CD8-positive, alpha-beta T cell (primary cell): ENCODE measurements at regions of chr14 and their contacts with region 1.

Region 1: GRCh38 chr14:106511006-106511799 is 984.8 kb downstream of the TMEM121 start:
- DNase-seq: peak; percentile 35 to 86 (median 65)
- ATAC-seq: peak; percentile 55
- H3K4me3 ChIP-seq: peak overlapping the region in 1 of 2 experiments; percentile 12
- H3K4me3 Mint-ChIP-seq: peak overlapping the region; percentile 63
- H3K27ac ChIP-seq: peak overlapping the region; percentile 66 to 68
- H3K27ac Mint-ChIP-seq: peak overlapping the region; percentile 98
- H3K4me1 ChIP-seq: peaks cover 68% of the 10 kb centered on the region
- H3K4me1 Mint-ChIP-seq: peaks cover 76% of the 10 kb centered on the region
- H3K27me3 ChIP-seq: no peaks in the 10 kb centered on the region
- H3K27me3 Mint-ChIP-seq: no peaks in the 10 kb centered on the region
- CTCF ChIP-seq: no peak

Region 2: GRCh38 chr14:106228541-106229158 is 282.6 kb before region 1 on chr14:
- CTCF ChIA-PET with region 1: no interaction called
- POLR2A ChIA-PET with region 1: no interaction called
- intact Hi-C with region 1: no loop called
- DNase-seq: peak in 8 of 9 experiments; percentile 21 to 74 (median 42)
- ATAC-seq: peak; percentile 95
- H3K4me3 ChIP-seq: peak overlapping the region; percentile 16 to 36
- H3K4me3 Mint-ChIP-seq: peak overlapping the region; percentile 87
- H3K27ac ChIP-seq: peak overlapping the region; percentile 45 to 64
- H3K27ac Mint-ChIP-seq: peak overlapping the region; percentile 97
- H3K4me1 ChIP-seq: peaks cover 54% of the 10 kb centered on the region
- H3K4me1 Mint-ChIP-seq: peaks cover 55% of the 10 kb centered on the region
- H3K27me3 ChIP-seq: no peaks in the 10 kb centered on the region
- H3K27me3 Mint-ChIP-seq: no peaks in the 10 kb centered on the region
- CTCF ChIP-seq: no peak

Region 3: GRCh38 chr14:106347890-106348755 is 163.1 kb before region 1 on chr14:
- CTCF ChIA-PET with region 1: interaction called, 3 read pairs
- POLR2A ChIA-PET with region 1: no interaction called
- intact Hi-C with region 1: loop called in 1 of 2 experiments (anchors 5 kb)
- DNase-seq: no peak
- ATAC-seq: no peak
- H3K4me3 ChIP-seq: no peak overlapping the region
- H3K4me3 Mint-ChIP-seq: no peak overlapping the region
- H3K27ac ChIP-seq: no peak overlapping the region
- H3K27ac Mint-ChIP-seq: no peak overlapping the region
- H3K4me1 ChIP-seq: no peaks in the 10 kb centered on the region
- H3K4me1 Mint-ChIP-seq: peaks cover 4% of the 10 kb centered on the region
- H3K27me3 ChIP-seq: no peaks in the 10 kb centered on the region
- H3K27me3 Mint-ChIP-seq: peaks cover 19% of the 10 kb centered on the region
- CTCF ChIP-seq: no peak

Region 4: DNA sequence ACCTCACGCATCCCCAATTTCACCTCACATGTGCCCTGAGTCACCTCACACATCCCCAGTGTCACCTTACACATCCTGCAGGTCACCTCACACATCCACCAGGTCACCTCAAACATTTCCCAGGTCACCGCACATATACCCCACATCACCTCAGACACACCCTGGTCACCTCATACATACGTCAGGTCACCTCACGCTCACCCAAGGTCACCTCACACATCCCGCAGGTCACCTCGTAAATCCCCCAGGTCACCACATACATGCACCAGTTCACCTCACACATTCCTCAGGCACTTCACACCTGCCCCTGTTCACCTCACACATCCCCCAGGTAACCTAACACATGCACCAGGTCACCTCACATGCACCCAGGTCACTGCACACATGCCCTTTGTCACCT is 120.8 kb before region 1 on chr14:
- CTCF ChIA-PET with region 1: no interaction called
- POLR2A ChIA-PET with region 1: no interaction called
- intact Hi-C with region 1: loop called (anchors 5 to 10 kb)
- DNase-seq: no peak
- ATAC-seq: peak; percentile 51
- H3K4me3 ChIP-seq: no peak overlapping the region
- H3K4me3 Mint-ChIP-seq: no peak overlapping the region
- H3K27ac ChIP-seq: no peak overlapping the region
- H3K27ac Mint-ChIP-seq: no peak overlapping the region
- H3K4me1 ChIP-seq: no peaks in the 10 kb centered on the region
- H3K4me1 Mint-ChIP-seq: peaks cover 34% of the 10 kb centered on the region
- H3K27me3 ChIP-seq: peaks cover 0 to 5% of the 10 kb centered on the region in 2 experiments
- H3K27me3 Mint-ChIP-seq: peaks cover 14% of the 10 kb centered on the region
- CTCF ChIP-seq: no peak

Region 5: GRCh38 chr14:106417224-106418049 is 93.8 kb before region 1 on chr14:
- CTCF ChIA-PET with region 1: interaction called, 12 read pairs
- POLR2A ChIA-PET with region 1: no interaction called
- intact Hi-C with region 1: no loop called
- DNase-seq: peak; percentile 45 to 92 (median 76)
- ATAC-seq: peak; percentile 87
- H3K4me3 ChIP-seq: no peak overlapping the region
- H3K4me3 Mint-ChIP-seq: no peak overlapping the region
- H3K27ac ChIP-seq: no peak overlapping the region
- H3K27ac Mint-ChIP-seq: no peak overlapping the region
- H3K4me1 ChIP-seq: peaks cover 3% of the 10 kb centered on the region
- H3K4me1 Mint-ChIP-seq: peaks cover 4% of the 10 kb centered on the region
- H3K27me3 ChIP-seq: peaks cover 0 to 3% of the 10 kb centered on the region in 2 experiments
- H3K27me3 Mint-ChIP-seq: no peaks in the 10 kb centered on the region
- CTCF ChIP-seq: peak; percentile 97

Region 6: GRCh38 chr14:106491851-106492250 is 19.4 kb before region 1 on chr14:
- CTCF ChIA-PET with region 1: interaction called, 26 read pairs
- POLR2A ChIA-PET with region 1: interaction called, 4 read pairs
- intact Hi-C with region 1: no loop called
- DNase-seq: peak in 1 of 9 experiments; percentile 35
- ATAC-seq: no peak
- H3K4me3 ChIP-seq: no peak overlapping the region
- H3K4me3 Mint-ChIP-seq: no peak overlapping the region
- H3K27ac ChIP-seq: no peak overlapping the region
- H3K27ac Mint-ChIP-seq: no peak overlapping the region
- H3K4me1 ChIP-seq: peaks cover 6% of the 10 kb centered on the region
- H3K4me1 Mint-ChIP-seq: peaks cover 13% of the 10 kb centered on the region
- H3K27me3 ChIP-seq: no peaks in the 10 kb centered on the region
- H3K27me3 Mint-ChIP-seq: no peaks in the 10 kb centered on the region
- CTCF ChIP-seq: peak; percentile 49

Region 7: GRCh38 chr14:106530423-106531107 is 19.4 kb after region 1 on chr14:
- CTCF ChIA-PET with region 1: interaction called, 14 read pairs
- POLR2A ChIA-PET with region 1: interaction called, 4 read pairs
- intact Hi-C with region 1: no loop called
- DNase-seq: peak in 6 of 9 experiments; percentile 33 to 72 (median 62)
- ATAC-seq: peak; percentile 95
- H3K4me3 ChIP-seq: no peak overlapping the region
- H3K4me3 Mint-ChIP-seq: no peak overlapping the region
- H3K27ac ChIP-seq: no peak overlapping the region
- H3K27ac Mint-ChIP-seq: no peak overlapping the region
- H3K4me1 ChIP-seq: no peaks in the 10 kb centered on the region
- H3K4me1 Mint-ChIP-seq: peaks cover 3% of the 10 kb centered on the region
- H3K27me3 ChIP-seq: no peaks in the 10 kb centered on the region
- H3K27me3 Mint-ChIP-seq: peaks cover 13% of the 10 kb centered on the region
- CTCF ChIP-seq: peak; percentile 53